ENCODE measurements at regions of chr19 and their contacts with region 1.

Region 1: DNA sequence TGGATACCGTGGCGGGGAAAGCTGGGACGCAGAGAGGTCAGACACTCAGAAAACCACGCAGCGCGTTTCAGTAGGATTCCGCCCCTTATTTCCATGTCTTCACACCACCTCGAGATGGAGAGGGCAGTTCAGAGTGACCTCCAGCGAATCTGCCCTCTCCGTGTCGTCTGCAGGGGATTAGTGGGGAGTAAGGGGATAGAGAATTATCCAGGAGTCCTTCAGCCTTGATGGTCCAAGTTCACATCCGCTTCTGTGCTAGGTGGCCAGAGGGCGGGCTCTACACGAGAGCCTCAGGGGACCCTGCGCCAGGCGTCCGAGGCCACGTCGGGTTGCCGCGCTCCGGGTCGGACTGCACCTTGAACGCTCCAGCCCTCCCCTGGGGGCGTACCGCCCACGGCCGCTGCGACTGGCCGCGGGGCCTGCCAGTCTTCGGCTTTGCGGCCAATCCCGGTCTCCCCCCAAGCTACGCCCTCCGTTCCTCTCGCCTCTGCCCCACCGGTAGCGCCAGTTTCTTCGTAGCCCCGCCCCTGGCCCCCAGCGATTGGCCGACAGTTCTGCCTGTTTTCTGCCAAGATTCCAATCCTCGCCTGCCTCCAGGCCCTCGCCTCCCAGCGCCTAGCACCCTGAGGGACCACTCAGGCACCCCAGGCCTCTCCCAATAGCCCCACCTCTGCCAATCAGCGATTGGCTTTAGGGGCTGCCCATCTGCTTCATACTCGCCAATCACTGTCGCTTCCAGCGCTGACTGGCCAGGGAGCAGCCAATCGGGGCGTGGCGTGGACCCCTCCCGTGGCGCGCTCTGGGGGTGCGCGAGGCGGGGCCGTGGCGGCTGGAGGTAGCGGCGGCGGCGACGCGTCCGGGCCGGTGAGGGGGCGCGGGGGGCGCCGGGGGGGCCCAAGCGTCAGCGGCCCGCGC is at the start of gene SLC25A42:
- DNase-seq: peak; percentile 99
- ATAC-seq: peak; percentile 96
- H3K4me3 Mint-ChIP-seq: peak within 1 kb of the TSS; percentile 75
- H3K27ac Mint-ChIP-seq: peak within 1 kb of the TSS; percentile 85
- H3K4me1 Mint-ChIP-seq: peaks cover 34% of the 10 kb centered on the region
- H3K27me3 Mint-ChIP-seq: no peaks in the 10 kb centered on the region
- total RNA-seq, gene SLC25A42: 10.4 to 10.6 TPM

Region 2: DNA sequence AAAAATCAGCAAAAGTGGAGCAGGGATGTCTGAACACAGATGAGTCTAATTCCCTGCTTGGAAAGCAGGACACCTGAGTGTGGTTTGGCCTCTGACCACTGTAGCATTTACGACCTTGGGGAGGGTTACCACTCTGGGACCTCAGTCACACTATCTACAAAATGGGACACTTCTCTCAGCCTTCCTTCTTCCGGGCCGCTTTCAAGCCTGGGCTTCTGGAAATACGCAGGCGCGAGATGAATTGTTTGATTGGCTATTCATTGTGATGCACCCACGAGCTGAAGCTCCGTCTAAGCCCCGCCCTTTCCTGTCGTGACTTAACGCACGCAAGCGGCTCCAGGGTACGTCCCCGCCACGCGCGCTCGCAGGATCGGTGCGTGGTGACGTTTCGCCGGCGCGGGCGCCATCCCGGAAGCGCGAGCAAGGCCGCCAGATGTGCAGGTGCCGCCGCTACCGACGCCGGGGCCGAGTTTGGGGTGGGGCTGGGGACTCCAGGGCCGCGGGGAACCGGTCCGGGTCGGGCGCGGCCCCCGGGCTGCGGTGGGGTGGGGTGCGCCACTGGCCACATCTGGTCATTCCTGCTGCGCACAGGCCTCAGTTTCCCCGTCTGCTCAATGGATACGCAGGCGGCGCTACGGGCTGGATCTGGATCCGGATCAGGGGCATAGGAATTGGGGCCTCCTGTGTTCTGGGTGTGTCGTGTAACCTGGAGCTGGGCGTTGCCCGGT is 505.8 kb before region 1 on chr19 and contains the start of gene KXD1:
- CTCF ChIA-PET with region 1: no interaction called
- POLR2A ChIA-PET with region 1: no interaction called
- intact Hi-C with region 1: loop called in 1 of 2 experiments (anchors 1 kb)
- DNase-seq: peak; percentile 99
- ATAC-seq: peak; percentile 99
- H3K4me3 Mint-ChIP-seq: peak within 1 kb of the TSS; percentile 91
- H3K27ac Mint-ChIP-seq: peak within 1 kb of the TSS; percentile 95
- H3K4me1 Mint-ChIP-seq: peaks cover 20% of the 10 kb centered on the region
- H3K27me3 Mint-ChIP-seq: no peaks in the 10 kb centered on the region
- total RNA-seq, gene KXD1: 121 to 170 TPM

Region 3: GRCh38 chr19:18831524-18832305 is 231.7 kb before region 1 on chr19 and contains the start of gene UPF1:
- CTCF ChIA-PET with region 1: no interaction called
- POLR2A ChIA-PET with region 1: no interaction called
- intact Hi-C with region 1: loop called in 1 of 2 experiments (anchors 1 kb)
- DNase-seq: peak; percentile 98
- ATAC-seq: peak; percentile 82
- H3K4me3 Mint-ChIP-seq: peak within 1 kb of the TSS; percentile 96
- H3K27ac Mint-ChIP-seq: peak within 1 kb of the TSS; percentile 90
- H3K4me1 Mint-ChIP-seq: peaks cover 34% of the 10 kb centered on the region
- H3K27me3 Mint-ChIP-seq: peaks cover 3% of the 10 kb centered on the region
- total RNA-seq, gene UPF1: 72.4 to 74.0 TPM

Region 4: DNA sequence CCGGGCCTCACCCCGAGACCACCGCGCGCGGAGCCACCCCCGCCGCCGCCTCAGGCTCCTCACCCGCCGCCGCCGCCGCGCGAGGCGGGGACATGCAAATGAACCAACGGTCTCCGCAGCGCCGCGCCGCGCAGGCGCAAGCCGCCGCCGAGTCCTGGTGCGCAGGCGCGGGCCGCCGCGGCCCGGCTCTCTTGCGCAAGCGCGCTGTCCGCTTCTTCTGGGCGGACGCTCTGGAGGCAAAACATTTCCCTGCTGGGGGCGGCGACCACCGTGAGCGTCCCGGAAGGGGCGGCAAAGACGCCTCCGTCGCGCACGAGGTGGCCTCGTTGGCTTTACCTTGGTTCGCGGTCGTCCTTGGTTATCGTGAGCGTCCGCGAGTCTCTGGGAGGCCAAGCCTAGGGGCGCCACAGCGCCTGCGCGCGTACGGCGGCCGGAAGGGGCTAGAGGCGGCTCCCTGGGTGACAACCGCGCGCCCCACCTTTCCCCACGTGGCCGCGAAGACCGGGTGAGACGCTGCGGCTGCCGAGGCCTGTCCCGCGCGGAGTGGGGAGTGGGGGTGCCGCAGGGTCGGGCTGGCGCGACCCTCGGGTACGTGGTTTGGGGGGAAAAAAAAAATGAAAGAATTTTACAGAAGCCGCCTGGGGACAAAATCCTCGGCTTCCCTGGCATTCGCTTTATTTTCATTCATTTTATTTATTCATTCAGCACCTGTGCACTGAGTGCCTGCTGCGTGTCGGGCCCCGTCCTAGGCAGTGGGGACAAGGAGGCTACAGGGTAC is 29.8 kb before region 1 on chr19 and contains the starts of genes ARMC6 and SUGP2:
- CTCF ChIA-PET with region 1: no interaction called
- POLR2A ChIA-PET with region 1: no interaction called
- intact Hi-C with region 1: loop called (anchors 1 kb)
- DNase-seq: peak; percentile 92
- ATAC-seq: peak; percentile 78
- H3K4me3 Mint-ChIP-seq: peak within 1 kb of the TSS; percentile 98
- H3K27ac Mint-ChIP-seq: peak within 1 kb of the TSS; percentile 96
- H3K4me1 Mint-ChIP-seq: peaks cover 31% of the 10 kb centered on the region
- H3K27me3 Mint-ChIP-seq: no peaks in the 10 kb centered on the region
- total RNA-seq, gene ARMC6: 33.0 to 40.8 TPM
- total RNA-seq, gene SUGP2: 89.8 to 104 TPM

Region 5: DNA sequence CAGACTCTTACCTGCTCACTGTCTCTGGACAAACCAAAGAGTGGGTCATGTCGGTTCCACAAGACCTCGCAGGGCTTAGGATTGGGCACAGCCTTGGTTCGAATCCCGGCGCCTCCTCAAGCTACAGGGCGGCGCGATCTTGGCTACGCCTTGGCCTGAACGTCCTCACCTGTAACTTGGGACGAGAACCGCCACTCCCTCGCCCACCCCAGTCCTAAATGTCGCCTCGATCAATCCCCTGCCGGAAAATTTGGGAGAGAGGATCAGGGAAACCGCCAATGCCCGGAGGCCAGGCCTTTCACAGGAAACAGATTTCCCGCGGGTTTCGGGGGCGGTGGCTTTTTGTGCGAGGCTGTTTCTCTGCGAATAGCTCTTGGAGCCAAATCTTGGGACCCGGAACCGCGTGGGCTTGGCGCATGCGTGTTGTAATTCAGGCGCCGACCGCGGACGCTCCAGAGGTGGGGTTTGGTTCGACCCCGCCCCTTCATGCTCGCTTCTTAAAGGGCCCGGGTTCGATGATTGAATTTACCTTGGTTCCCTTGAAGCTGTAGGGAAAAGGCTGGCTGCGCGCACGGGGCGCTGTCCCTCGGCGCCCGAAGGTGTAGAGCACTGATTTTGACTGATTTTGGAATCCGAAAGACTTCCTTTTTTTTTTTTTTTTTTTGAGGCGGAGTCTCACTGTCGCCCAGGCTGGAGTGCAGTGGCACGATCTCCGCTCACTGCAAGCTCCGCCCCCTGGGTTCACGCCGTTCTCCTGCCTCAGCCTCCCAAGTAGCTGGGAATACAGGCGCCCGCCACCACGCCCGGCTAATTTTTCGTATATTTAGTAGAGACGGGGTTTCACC is 139.8 kb after region 1 on chr19 and contains the start of gene NR2C2AP:
- CTCF ChIA-PET with region 1: no interaction called
- POLR2A ChIA-PET with region 1: no interaction called
- intact Hi-C with region 1: loop called in 1 of 2 experiments (anchors 1 kb)
- DNase-seq: peak; percentile 96
- ATAC-seq: peak; percentile 95
- H3K4me3 Mint-ChIP-seq: peak within 1 kb of the TSS; percentile 90
- H3K27ac Mint-ChIP-seq: peak within 1 kb of the TSS; percentile 84
- H3K4me1 Mint-ChIP-seq: peaks cover 30% of the 10 kb centered on the region
- H3K27me3 Mint-ChIP-seq: no peaks in the 10 kb centered on the region
- total RNA-seq, gene NR2C2AP: 34.7 to 46.6 TPM

Region 6: DNA sequence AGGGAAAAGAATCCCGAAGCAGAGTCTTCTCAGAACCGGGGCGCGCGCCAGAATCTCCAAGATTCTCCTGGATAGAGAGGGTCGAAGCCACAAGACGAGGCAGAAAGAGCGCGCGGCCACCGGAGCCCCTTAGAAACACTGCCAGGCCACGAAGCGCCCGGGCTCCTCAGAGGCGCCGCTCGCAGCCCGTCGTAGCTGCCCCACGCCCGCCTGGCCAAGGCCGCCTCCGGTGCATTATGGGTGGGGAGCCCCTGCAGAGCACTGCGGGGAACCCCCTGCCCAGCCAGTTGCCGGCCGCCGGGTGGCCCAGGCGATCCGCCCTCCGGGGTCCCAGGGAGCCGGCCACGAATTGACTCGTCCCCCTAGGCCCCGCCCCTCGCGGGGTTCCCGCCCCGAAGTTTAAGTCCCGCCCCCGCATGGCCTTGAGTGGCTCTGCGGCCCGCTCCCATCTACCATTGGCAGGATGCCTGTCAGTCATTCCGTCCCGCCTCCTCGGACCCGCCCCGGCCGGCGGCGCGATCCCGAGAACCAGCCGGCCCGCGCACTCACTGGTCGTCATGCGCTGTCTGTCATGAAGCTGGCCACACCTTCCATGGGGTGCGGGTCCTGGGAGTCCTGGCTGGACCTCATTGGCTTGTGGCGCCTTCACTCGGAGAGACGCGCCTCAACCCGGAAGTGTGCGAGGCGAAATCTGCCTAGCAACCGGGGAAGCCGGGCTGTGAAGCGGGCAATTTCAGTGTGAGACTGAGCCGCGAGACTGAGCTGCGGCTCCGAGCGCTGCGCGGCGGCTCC is 321.9 kb after region 1 on chr19:
- CTCF ChIA-PET with region 1: no interaction called
- POLR2A ChIA-PET with region 1: no interaction called
- intact Hi-C with region 1: loop called in 1 of 2 experiments (anchors 1 kb)
- DNase-seq: peak; percentile 100
- ATAC-seq: peak; percentile 96
- H3K4me3 Mint-ChIP-seq: peak overlapping the region; percentile 86
- H3K27ac Mint-ChIP-seq: peak overlapping the region; percentile 78
- H3K4me1 Mint-ChIP-seq: peaks cover 36% of the 10 kb centered on the region
- H3K27me3 Mint-ChIP-seq: no peaks in the 10 kb centered on the region

Region 7: DNA sequence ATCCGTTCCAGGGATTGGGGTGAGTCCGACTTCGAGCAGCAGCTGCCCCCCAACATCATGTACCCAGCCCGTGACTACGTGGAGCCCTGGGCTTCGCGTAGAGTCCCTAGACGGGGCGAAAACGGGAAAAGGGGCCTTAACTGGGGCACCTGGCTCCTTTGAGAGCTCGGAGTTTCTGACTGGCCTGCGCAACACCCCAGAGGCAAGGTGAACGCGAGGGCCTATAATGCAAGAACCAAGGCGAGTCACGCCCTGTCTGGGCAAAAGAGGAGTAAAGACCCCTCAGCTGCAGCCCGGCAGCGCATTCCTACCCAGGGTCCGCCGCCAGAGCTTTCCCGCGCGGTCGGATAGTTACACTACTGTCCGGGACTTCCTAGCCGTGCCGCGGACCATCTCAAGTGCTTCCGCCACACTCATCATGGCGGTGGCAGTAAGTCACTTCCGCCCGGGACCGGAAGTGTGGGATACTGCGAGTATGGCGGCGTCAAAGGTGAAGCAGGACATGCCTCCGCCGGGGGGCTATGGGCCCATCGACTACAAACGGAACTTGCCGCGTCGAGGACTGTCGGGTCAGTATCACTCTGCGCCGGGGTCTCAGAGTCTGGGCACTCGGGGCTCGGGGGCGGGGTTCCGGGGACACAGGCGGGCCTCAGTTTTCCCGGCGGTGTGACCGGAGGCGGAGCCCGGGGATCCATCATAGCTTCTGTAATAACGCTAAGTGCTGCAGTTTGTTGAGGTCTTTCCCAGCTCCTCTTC is 452.5 kb after region 1 on chr19 and contains the start of gene NDUFA13:
- CTCF ChIA-PET with region 1: no interaction called
- POLR2A ChIA-PET with region 1: no interaction called
- intact Hi-C with region 1: loop called in 1 of 2 experiments (anchors 1 kb)
- DNase-seq: peak; percentile 95
- ATAC-seq: peak; percentile 94
- H3K4me3 Mint-ChIP-seq: peak within 1 kb of the TSS; percentile 83
- H3K27ac Mint-ChIP-seq: peak within 1 kb of the TSS; percentile 92
- H3K4me1 Mint-ChIP-seq: peaks cover 25% of the 10 kb centered on the region
- H3K27me3 Mint-ChIP-seq: no peaks in the 10 kb centered on the region
- total RNA-seq, gene NDUFA13: 310 to 323 TPM

Region 8: GRCh38 chr19:19956434-19957075 is 893.1 kb after region 1 on chr19:
- CTCF ChIA-PET with region 1: no interaction called
- POLR2A ChIA-PET with region 1: no interaction called
- intact Hi-C with region 1: no loop called
- DNase-seq: peak; percentile 24
- ATAC-seq: no peak
- H3K4me3 Mint-ChIP-seq: no peak overlapping the region
- H3K27ac Mint-ChIP-seq: no peak overlapping the region
- H3K4me1 Mint-ChIP-seq: no peaks in the 10 kb centered on the region
- H3K27me3 Mint-ChIP-seq: no peaks in the 10 kb centered on the region

Measured in activated CD4-positive, alpha-beta T cell treated with anti-CD3 and anti-CD28 coated beads for 36 hours (primary cell).